Mammary epithelial cell (primary cell): ENCODE measurements at regions of chr7 and their contacts with region 1.

Region 1: GRCh38 chr7:44072364-44073231 is 7.2 kb upstream of the PGAM2 start:
- DNase-seq: peak; percentile 83
- H3K4me3 ChIP-seq: no peak overlapping the region
- H3K27ac ChIP-seq: no peak overlapping the region
- H3K4me1 ChIP-seq: peaks cover 40% of the 10 kb centered on the region
- H3K27me3 ChIP-seq: no peaks in the 10 kb centered on the region
- CTCF ChIP-seq: peak; percentile 75 to 76

Region 2: GRCh38 chr7:44123190-44124003 is 50.8 kb after region 1 on chr7 and contains the start of gene POLD2:
- CTCF ChIA-PET with region 1: interaction called, 5 read pairs
- dilution Hi-C with region 1: no loop called
- in situ Hi-C with region 1: no loop called
- intact Hi-C with region 1: loop called (anchors 5 kb)
- DNase-seq: peak; percentile 96
- H3K4me3 ChIP-seq: peak within 1 kb of the TSS; percentile 77 to 89 (median 84)
- H3K27ac ChIP-seq: peak within 1 kb of the TSS; percentile 87
- H3K4me1 ChIP-seq: peaks cover 20% of the 10 kb centered on the region
- H3K27me3 ChIP-seq: no peaks in the 10 kb centered on the region
- CTCF ChIP-seq: no peak
- total RNA-seq, gene POLD2: 72.8 to 144 TPM